IMR-90 (cell line): ENCODE measurements at regions of chr1 and their contacts with region 1.

Region 1: GRCh38 chr1:93489756-93490155 is 41.8 kb downstream of the FNBP1L start:
- DNase-seq: peak; percentile 7
- ATAC-seq: no peak
- H3K4me3 ChIP-seq: no peak overlapping the region
- H3K27ac ChIP-seq: no peak overlapping the region
- H3K4me1 ChIP-seq: no peaks in the 10 kb centered on the region; the same call in 1 of the 2 replicates
- H3K27me3 ChIP-seq: no peaks in the 10 kb centered on the region
- CTCF ChIP-seq: no peak
- POLR2A ChIP-seq: no peak
- RAD21 ChIP-seq: no peak

Region 2: DNA sequence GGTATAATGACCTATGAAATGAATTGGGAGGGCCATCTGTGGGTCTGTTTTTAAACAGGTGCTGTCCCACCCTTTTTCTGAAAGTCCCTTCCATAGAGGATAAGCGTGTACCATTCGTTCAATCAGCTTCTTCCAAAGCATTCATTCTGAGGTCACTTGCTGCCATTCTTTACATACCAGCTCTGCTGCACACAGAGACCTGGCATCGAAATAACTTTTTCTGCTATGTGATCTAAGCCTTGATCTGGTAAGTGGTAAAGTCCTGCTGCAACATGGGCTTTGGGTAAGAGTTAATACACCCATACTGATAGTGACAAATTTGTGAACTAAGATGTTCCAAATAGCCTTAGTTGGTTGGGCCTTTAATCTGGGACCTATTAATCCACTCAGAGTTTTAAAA is 105.1 kb before region 1 on chr1:
- CTCF ChIA-PET with region 1: no interaction called
- POLR2A ChIA-PET with region 1: no interaction called
- dilution Hi-C with region 1: no loop called
- in situ Hi-C with region 1: no loop called
- intact Hi-C with region 1: loop called (anchors 10 kb)
- DNase-seq: no peak
- ATAC-seq: no peak
- H3K4me3 ChIP-seq: no peak overlapping the region
- H3K27ac ChIP-seq: no peak overlapping the region
- H3K4me1 ChIP-seq: no peaks in the 10 kb centered on the region
- H3K27me3 ChIP-seq: no peaks in the 10 kb centered on the region
- CTCF ChIP-seq: no peak
- POLR2A ChIP-seq: no peak
- RAD21 ChIP-seq: no peak

Region 3: GRCh38 chr1:93415296-93415695 is 74.5 kb before region 1 on chr1:
- CTCF ChIA-PET with region 1: no interaction called
- POLR2A ChIA-PET with region 1: no interaction called
- dilution Hi-C with region 1: no loop called
- in situ Hi-C with region 1: no loop called
- intact Hi-C with region 1: no loop called
- DNase-seq: no peak
- ATAC-seq: no peak
- H3K4me3 ChIP-seq: no peak overlapping the region
- H3K27ac ChIP-seq: no peak overlapping the region
- H3K4me1 ChIP-seq: no peaks in the 10 kb centered on the region
- H3K27me3 ChIP-seq: no peaks in the 10 kb centered on the region
- CTCF ChIP-seq: no peak
- POLR2A ChIP-seq: no peak
- RAD21 ChIP-seq: no peak